Common myeloid progenitor, CD34-positive (primary cell): ENCODE measurements at regions of chr12 and their contacts with region 1.

Region 1: DNA sequence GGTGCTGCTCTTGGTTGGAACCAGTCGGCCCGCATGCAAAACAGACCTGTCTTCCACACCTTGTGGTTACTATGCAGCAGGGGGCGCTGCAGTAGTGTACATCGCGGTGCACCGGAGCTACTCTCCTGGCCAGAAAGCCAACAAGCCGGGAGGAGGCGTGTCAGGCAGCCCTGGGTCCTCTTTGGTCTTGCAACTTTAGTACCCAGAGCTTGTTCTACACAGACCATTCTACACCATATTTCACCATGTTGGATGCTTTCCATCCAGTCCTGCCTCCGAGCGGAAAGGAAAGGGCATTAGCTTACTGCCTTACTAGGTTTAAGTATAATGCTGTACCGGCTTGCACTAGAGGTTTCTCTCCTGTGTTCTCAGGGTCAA is 927 bp upstream of the TMTC2 start:
- DNase-seq: peak; percentile 93 to 95 (median 95)
- H3K4me3 ChIP-seq: peak overlapping the region; percentile 81 to 99 (median 95)
- H3K27ac ChIP-seq: peak overlapping the region in 1 of 2 experiments; percentile 79
- H3K4me1 ChIP-seq: peaks cover 10 to 28% (median 19%) of the 10 kb centered on the region in 4 experiments
- H3K27me3 ChIP-seq: peaks cover 0 to 6% (median 0%) of the 10 kb centered on the region in 5 experiments

Region 2: GRCh38 chr12:82358200-82359114 is 327.3 kb before region 1 on chr12 and contains the starts of genes CCDC59 and METTL25:
- CTCF ChIA-PET with region 1: interaction called, 10 read pairs
- POLR2A ChIA-PET with region 1: no interaction called
- DNase-seq: peak; percentile 99
- H3K4me3 ChIP-seq: peak within 1 kb of the TSS; percentile 89 to 100 (median 99)
- H3K27ac ChIP-seq: peak within 1 kb of the TSS; percentile 98 to 99
- H3K4me1 ChIP-seq: peaks cover 12 to 24% (median 16%) of the 10 kb centered on the region in 4 experiments
- H3K27me3 ChIP-seq: no peaks in the 10 kb centered on the region

Region 3: DNA sequence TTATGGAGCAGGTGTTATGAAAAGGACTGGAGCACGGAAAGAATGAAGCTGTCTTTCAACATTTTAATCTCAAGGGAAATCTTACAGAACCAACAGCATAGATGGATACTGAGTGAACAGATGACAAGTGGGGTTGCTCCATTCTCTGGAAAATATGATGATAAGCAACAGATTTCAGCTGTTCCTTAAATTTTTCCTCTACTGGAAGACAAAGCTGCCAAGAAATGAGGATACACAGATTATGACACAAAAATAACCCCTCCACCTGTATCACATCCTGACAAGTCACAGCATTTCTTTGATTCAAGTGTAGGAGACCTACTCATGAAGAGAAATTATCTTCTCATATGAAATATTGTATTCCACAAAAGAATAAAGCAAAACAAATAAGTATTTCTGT is 12.1 kb before region 1 on chr12:
- CTCF ChIA-PET with region 1: interaction called, 10 read pairs
- POLR2A ChIA-PET with region 1: no interaction called
- DNase-seq: no peak
- H3K4me3 ChIP-seq: no peak overlapping the region
- H3K27ac ChIP-seq: no peak overlapping the region
- H3K4me1 ChIP-seq: no peaks in the 10 kb centered on the region
- H3K27me3 ChIP-seq: no peaks in the 10 kb centered on the region

Region 4: GRCh38 chr12:82698708-82699564 is 13.2 kb after region 1 on chr12:
- CTCF ChIA-PET with region 1: interaction called, 15 read pairs
- POLR2A ChIA-PET with region 1: no interaction called
- DNase-seq: no peak
- H3K4me3 ChIP-seq: no peak overlapping the region
- H3K27ac ChIP-seq: no peak overlapping the region
- H3K4me1 ChIP-seq: no peaks in the 10 kb centered on the region
- H3K27me3 ChIP-seq: no peaks in the 10 kb centered on the region

Region 5: DNA sequence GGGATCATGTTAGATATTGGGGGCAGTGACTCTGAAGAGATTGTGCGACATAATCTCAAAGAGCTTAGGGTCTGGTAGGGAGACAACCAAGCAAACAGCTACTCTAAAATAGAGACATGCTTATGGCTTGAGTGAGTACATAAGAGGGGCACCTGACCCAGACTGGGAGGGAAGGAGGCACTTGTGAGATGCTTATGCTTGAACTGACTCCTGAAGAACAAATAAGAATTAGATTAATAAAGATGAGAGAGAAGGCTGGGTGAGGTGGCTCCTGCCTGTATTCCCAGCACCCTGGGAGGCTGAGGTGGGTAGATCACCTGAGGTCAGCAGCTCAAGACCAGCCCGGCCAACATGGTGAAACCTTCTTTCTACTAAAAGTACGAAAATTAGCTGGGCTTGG is 20.0 kb after region 1 on chr12:
- CTCF ChIA-PET with region 1: interaction called, 12 read pairs
- POLR2A ChIA-PET with region 1: no interaction called
- DNase-seq: no peak
- H3K4me3 ChIP-seq: no peak overlapping the region
- H3K27ac ChIP-seq: no peak overlapping the region
- H3K4me1 ChIP-seq: no peaks in the 10 kb centered on the region
- H3K27me3 ChIP-seq: no peaks in the 10 kb centered on the region

Region 6: DNA sequence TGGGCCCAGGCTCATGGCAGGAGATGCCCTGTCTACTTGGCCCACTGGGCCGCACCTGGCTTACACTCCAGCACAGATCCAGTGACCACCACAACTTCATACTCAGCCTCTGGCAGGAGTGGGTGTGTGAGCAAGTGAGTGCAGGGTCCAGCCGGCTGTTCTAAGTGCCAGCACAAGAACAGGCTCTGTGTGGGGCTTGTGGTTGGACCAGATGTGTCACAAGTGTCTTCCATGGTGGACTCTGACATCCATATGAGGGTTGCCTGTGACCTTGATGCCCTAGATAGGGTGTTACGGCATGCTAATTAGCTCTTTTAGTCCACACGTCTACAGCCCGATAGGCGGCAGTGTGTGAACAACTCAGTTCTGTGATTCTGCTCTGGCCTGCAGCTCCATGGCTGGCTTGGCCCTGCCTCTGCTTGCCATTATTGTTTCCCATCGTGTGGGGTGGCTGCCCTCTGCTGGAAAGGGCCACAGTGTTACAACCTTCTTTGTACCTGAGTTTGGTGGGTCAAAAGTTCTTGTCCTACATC is 1137.7 kb after region 1 on chr12:
- CTCF ChIA-PET with region 1: interaction called, 28 read pairs
- POLR2A ChIA-PET with region 1: no interaction called
- DNase-seq: peak; percentile 26 to 34 (median 34)
- H3K4me3 ChIP-seq: no peak overlapping the region
- H3K27ac ChIP-seq: no peak overlapping the region
- H3K4me1 ChIP-seq: no peaks in the 10 kb centered on the region
- H3K27me3 ChIP-seq: no peaks in the 10 kb centered on the region